CD4-positive, alpha-beta memory T cell (primary cell): ENCODE measurements at regions of chr9 and their contacts with region 1.

Region 1: DNA sequence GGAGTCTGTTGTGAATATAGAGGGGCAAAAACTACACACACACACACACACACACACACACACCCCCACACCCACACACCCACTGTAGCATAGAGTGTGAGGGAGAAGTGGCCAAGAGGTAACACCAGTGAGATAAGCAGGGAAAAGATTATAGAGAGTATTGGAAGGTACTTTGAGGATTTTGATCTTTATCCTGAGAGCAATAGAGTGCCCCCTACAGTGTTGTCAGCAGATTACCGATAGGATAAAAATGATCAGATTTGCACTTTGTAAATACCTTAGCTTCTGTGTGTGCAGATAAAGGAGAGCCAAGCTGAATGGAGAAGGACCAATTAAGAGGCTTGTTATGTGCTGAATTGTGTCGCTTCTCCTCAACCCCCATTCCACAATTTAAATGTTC is 32.3 kb downstream of the ERCC6L2 start:
- DNase-seq: peak in 1 of 5 donors; percentile 7
- H3K4me3 ChIP-seq: no peak overlapping the region
- H3K4me3 Mint-ChIP-seq: no peak overlapping the region
- H3K27ac ChIP-seq: no peak overlapping the region
- H3K27ac Mint-ChIP-seq: no peak overlapping the region
- H3K4me1 ChIP-seq: no peaks in the 10 kb centered on the region
- H3K4me1 Mint-ChIP-seq: peaks cover 0 to 12% (median 7%) of the 10 kb centered on the region in 4 donors
- H3K27me3 ChIP-seq: no peaks in the 10 kb centered on the region
- H3K27me3 Mint-ChIP-seq: no peaks in the 10 kb centered on the region

Region 2: DNA sequence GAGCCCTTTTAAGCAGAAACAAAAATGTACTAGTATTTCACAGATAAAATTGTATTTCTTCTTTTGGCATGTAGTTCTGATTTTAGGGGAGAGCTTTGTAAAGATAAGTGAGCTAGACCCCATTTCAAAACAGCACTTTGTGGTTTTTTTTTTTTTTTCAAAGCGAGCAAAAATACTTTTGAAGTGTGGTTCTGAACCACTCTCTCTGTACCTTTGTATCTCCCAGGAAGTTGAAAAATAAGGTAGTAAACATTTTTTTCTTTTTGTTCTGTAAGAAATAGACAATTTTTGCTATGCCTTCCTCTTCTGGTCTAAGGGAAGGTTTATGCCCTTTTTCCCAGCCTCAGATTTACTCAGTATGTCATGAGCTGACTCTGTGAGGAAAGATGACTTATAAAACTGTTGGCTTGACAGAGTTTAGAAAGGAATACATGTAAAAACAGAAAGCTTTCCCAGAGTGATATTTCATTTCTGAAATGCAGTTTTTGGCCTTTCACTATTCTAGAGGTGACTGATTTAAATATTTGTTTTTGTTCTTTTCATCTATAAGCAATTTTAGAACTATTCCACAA is 19.8 kb before region 1 on chr9:
- CTCF ChIA-PET with region 1: interaction called, 3 read pairs
- POLR2A ChIA-PET with region 1: interaction called, 5 read pairs
- intact Hi-C with region 1: loop called (anchors 2 kb)
- DNase-seq: peak in 4 of 5 donors; percentile 23 to 39 (median 30)
- H3K4me3 ChIP-seq: no peak overlapping the region
- H3K4me3 Mint-ChIP-seq: peak overlapping the region; percentile 65 to 87 (median 77)
- H3K27ac ChIP-seq: peak overlapping the region; percentile 37
- H3K27ac Mint-ChIP-seq: peak overlapping the region; percentile 79 to 90 (median 85)
- H3K4me1 ChIP-seq: peaks cover 60% of the 10 kb centered on the region
- H3K4me1 Mint-ChIP-seq: peaks cover 43 to 64% (median 50%) of the 10 kb centered on the region in 4 donors
- H3K27me3 ChIP-seq: no peaks in the 10 kb centered on the region
- H3K27me3 Mint-ChIP-seq: no peaks in the 10 kb centered on the region